Heart right ventricle (tissue), 16 donors: ENCODE measurements at regions of chrX and their contacts with region 1.

Region 1: DNA sequence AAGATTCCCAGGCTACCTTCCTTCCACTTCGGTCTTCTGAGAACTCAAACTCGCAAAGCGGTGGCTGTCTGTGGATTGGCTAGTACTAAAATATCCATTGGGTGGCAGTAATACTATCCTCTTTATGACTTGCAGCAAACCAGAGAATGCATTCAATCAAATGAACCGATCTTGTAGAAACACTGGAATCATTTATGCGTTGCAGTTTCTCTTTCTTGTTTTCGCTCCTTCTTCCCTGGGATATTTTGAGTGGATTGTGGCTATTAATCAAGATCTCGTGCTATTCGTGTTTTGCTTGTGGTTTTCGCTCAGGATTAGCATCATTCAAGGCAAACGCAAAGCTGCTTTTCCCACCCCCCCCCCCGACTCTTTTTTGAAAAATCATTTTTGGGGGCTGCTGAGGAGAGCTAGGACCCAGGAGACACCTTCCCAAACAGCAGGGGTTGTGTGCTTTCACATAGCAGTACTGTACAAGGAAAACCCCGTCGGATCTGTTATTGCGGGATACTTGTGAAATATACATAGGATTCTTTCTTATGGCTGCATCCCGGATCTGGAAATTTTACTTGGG is at the start of gene IL1RAPL1:
- DNase-seq: no peak
- ATAC-seq: peak; percentile 70 to 91 (median 86)
- H3K4me3 ChIP-seq: peak within 1 kb of the TSS; percentile 10 to 56 (median 45)
- H3K27ac ChIP-seq: peak within 1 kb of the TSS in 5 of 10 donors; percentile 34 to 52 (median 46)
- H3K4me1 ChIP-seq: no peaks in the 10 kb centered on the region
- H3K27me3 ChIP-seq: peaks cover 0 to 43% (median 0%) of the 10 kb centered on the region in 7 donors
- CTCF ChIP-seq: peak in 6 of 9 donors; percentile 15 to 49 (median 38)
- total RNA-seq, gene IL1RAPL1: 1.3 to 6.3 (median 3.0) TPM

Region 2: DNA sequence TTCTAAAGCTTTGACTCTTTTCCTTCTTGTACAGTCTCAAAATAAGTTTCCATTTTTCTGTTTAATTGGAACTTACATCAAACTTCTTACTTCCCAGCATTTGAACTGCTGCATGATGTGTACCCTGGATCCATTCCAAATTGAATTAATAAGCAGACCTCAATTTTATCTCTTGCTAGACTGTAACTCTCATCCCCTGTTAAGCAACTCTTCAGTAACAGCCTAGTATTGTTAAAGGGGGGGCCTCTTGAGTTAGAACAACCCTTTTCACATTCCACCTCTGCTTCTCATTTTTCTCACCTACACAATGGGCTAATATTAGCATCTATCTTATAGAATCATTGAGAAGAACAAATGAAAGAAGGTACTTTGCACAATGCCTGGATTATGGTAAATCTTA is 169.6 kb after region 1 on chrX:
- intact Hi-C with region 1: loop called in 2 of 10 experiments (anchors 5 kb)
- DNase-seq: no peak
- ATAC-seq: peak in 5 of 8 donors; percentile 42 to 82 (median 68)
- H3K4me3 ChIP-seq: no peak overlapping the region
- H3K27ac ChIP-seq: no peak overlapping the region
- H3K4me1 ChIP-seq: peaks cover 0 to 12% (median 0%) of the 10 kb centered on the region in 9 donors
- H3K27me3 ChIP-seq: no peaks in the 10 kb centered on the region
- CTCF ChIP-seq: no peak

Region 3: DNA sequence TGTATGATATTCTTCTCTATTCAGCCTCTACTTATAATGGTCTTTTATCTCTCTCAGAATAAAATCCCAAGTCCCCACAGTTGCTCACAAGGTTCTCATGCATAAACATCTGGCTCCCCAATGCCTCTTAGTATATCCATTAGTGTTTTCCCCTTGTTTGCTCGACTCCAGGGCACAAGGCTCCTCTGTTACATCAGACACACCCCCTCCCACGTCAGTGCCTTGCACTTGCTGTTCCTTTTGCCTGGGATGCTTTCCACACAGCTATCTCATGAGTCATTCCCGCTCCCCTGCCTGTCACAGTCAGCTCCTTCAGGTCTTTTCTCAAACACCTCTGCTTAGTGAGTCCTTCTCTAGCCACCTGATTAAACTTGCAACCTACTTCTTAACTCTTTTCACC is 260.4 kb after region 1 on chrX:
- intact Hi-C with region 1: loop called in 2 of 10 experiments (anchors 10 kb)
- DNase-seq: peak; percentile 16 to 17
- ATAC-seq: peak in 7 of 8 donors; percentile 34 to 94 (median 84)
- H3K4me3 ChIP-seq: no peak overlapping the region
- H3K27ac ChIP-seq: peak overlapping the region in 2 of 10 donors; percentile 16 to 36
- H3K4me1 ChIP-seq: no peaks in the 10 kb centered on the region
- H3K27me3 ChIP-seq: no peaks in the 10 kb centered on the region
- CTCF ChIP-seq: no peak

Region 4: GRCh38 chrX:29044423-29045184 is 457.5 kb after region 1 on chrX:
- intact Hi-C with region 1: loop called in 4 of 10 experiments (anchors 5 to 10 kb)
- DNase-seq: no peak
- ATAC-seq: peak in 1 of 8 donors; percentile 29
- H3K4me3 ChIP-seq: no peak overlapping the region
- H3K27ac ChIP-seq: no peak overlapping the region
- H3K4me1 ChIP-seq: no peaks in the 10 kb centered on the region
- H3K27me3 ChIP-seq: no peaks in the 10 kb centered on the region
- CTCF ChIP-seq: peak in 5 of 9 donors; percentile 10 to 39 (median 27)

Region 5: GRCh38 chrX:29082558-29082957 is 495.5 kb after region 1 on chrX:
- intact Hi-C with region 1: loop called in 2 of 10 experiments (anchors 5 to 10 kb)
- DNase-seq: no peak
- ATAC-seq: no peak
- H3K4me3 ChIP-seq: no peak overlapping the region
- H3K27ac ChIP-seq: no peak overlapping the region
- H3K4me1 ChIP-seq: no peaks in the 10 kb centered on the region
- H3K27me3 ChIP-seq: no peaks in the 10 kb centered on the region
- CTCF ChIP-seq: no peak

Region 6: DNA sequence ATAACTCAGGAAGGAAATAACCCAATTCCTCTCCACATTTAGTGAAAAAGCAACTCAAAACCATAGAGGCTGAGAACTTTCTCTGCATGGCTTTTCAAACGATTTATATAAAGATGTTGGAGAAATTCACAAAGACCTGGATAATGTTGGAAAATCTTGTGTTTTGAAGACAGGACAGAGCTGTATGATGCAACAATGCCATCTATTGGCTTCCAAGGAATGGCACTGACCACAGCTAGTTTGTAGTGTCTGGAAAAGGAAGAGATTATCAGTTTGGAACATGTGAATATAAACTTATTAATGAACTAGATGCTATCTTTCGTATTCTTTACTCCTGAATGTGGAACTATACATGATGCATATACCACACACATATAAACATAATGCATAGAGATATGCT is 503.7 kb after region 1 on chrX:
- intact Hi-C with region 1: loop called in 5 of 10 experiments (anchors 5 to 10 kb)
- DNase-seq: peak in 1 of 2 donors; percentile 5
- ATAC-seq: no peak
- H3K4me3 ChIP-seq: no peak overlapping the region
- H3K27ac ChIP-seq: no peak overlapping the region
- H3K4me1 ChIP-seq: no peaks in the 10 kb centered on the region
- H3K27me3 ChIP-seq: no peaks in the 10 kb centered on the region
- CTCF ChIP-seq: peak in 8 of 9 donors; percentile 8 to 65 (median 48)